H1 (cell line): ENCODE measurements at regions of chr9 and their contacts with region 1.

Region 1: DNA sequence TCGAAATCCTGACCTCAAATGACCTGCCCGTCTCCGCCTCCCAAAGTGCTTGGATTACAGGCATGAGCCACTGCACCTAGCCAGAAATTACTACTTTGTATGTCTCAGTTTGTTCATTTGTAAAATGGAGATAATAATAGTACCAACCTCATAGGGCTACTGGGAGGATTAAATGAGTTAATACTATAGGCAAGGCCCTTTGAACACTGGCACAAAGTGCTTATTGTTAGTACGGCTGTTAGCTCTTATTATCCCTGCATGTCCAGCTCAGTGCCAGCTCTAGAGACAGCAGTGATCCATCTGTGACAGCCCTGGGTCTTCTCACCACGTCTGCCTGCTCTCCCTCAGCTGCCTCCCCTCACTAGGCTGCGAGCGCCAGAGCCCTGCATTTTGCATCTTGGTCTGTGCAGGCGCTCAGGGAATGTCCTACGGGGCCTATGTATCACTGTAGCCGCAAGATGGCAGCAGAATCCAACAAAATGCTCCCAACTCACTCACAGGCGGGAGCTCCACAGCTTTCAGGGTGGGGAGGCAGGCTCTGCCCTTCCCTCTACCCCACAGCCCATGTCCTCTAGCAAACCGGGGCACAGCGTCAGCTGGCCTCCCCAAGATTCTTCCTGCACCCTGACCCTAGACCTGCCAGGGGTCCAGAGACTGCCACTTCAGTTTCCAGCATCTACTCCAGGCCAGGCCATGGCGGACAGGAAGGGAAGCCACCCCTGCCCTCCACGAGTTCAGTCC is 17.7 kb upstream of the AKNA start:
- DNase-seq: peak in 1 of 2 experiments; percentile 82
- H3K4me3 ChIP-seq: no peak overlapping the region
- H3K27ac ChIP-seq: no peak overlapping the region
- H3K4me1 ChIP-seq: peaks cover 0 to 12% (median 6%) of the 10 kb centered on the region in 4 experiments; a peak in 5 of 7 replicates
- H3K27me3 ChIP-seq: no peaks in the 10 kb centered on the region
- CTCF ChIP-seq: peak; percentile 77 to 93 (median 86)
- EP300 ChIP-seq: no peak
- POLR2A ChIP-seq: no peak
- RAD21 ChIP-seq: peak; percentile 97

Region 2: GRCh38 chr9:114207034-114207810 is 198.2 kb before region 1 on chr9:
- CTCF ChIA-PET with region 1: no interaction called
- POLR2A ChIA-PET with region 1: no interaction called
- DNase-seq: no peak
- H3K4me3 ChIP-seq: no peak overlapping the region
- H3K27ac ChIP-seq: no peak overlapping the region
- H3K4me1 ChIP-seq: peaks cover 0 to 24% (median 6%) of the 10 kb centered on the region in 4 experiments; a peak in 6 of 7 replicates
- H3K27me3 ChIP-seq: no peaks in the 10 kb centered on the region
- CTCF ChIP-seq: no peak
- EP300 ChIP-seq: no peak
- POLR2A ChIP-seq: no peak
- RAD21 ChIP-seq: no peak

Region 3: GRCh38 chr9:114271641-114272081 is 133.8 kb before region 1 on chr9:
- CTCF ChIA-PET with region 1: no interaction called
- POLR2A ChIA-PET with region 1: no interaction called
- DNase-seq: peak in 1 of 2 experiments; percentile 80
- H3K4me3 ChIP-seq: no peak overlapping the region
- H3K27ac ChIP-seq: no peak overlapping the region
- H3K4me1 ChIP-seq: no peaks in the 10 kb centered on the region
- H3K27me3 ChIP-seq: no peaks in the 10 kb centered on the region
- CTCF ChIP-seq: peak; percentile 66 to 69 (median 66)
- EP300 ChIP-seq: no peak
- POLR2A ChIP-seq: no peak
- RAD21 ChIP-seq: peak; percentile 70 to 77

Region 4: DNA sequence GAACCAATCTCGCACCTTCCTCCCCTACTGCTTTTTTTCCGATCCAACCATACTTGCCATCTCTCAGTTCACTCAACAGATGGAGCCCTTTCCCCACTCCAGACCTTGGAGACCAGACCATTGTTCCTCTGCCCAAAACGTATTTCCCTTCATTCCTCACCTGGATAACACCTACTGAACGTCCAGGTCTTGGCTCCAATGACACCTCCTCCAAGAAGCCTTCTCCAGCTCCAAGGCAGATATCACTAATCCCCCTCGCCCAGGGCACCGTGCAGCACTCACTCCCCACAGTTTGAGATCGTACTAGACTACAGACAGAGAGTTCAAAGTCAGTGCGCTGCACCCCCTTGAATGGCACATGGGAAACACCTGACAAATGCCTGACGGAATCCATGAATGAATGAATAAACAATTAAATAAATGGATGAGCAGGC is 29.4 kb after region 1 on chr9:
- CTCF ChIA-PET with region 1: interaction called, 271 read pairs
- POLR2A ChIA-PET with region 1: interaction called, 3 read pairs
- DNase-seq: peak in 1 of 2 experiments; percentile 31
- H3K4me3 ChIP-seq: no peak overlapping the region
- H3K27ac ChIP-seq: no peak overlapping the region
- H3K4me1 ChIP-seq: peaks cover 0 to 6% (median 0%) of the 10 kb centered on the region in 4 experiments; a peak in 3 of 7 replicates
- H3K27me3 ChIP-seq: no peaks in the 10 kb centered on the region
- CTCF ChIP-seq: peak; percentile 51 to 91 (median 84)
- EP300 ChIP-seq: no peak
- POLR2A ChIP-seq: no peak
- RAD21 ChIP-seq: peak; percentile 96

Region 5: GRCh38 chr9:114505187-114506081 is 100.0 kb after region 1 on chr9 and contains the start of gene WHRN:
- CTCF ChIA-PET with region 1: interaction called, 24 read pairs
- POLR2A ChIA-PET with region 1: interaction called, 3 read pairs
- DNase-seq: peak; percentile 77 to 94
- H3K4me3 ChIP-seq: peak within 1 kb of the TSS; percentile 62 to 68 (median 66)
- H3K27ac ChIP-seq: no peak within 1 kb of the TSS
- H3K4me1 ChIP-seq: peaks cover 10 to 22% (median 16%) of the 10 kb centered on the region in 4 experiments
- H3K27me3 ChIP-seq: peaks cover 2 to 14% (median 8%) of the 10 kb centered on the region in 4 experiments; a peak in 6 of 7 replicates
- CTCF ChIP-seq: peak in 2 of 3 experiments; percentile 0 to 3; a peak in 2 of 4 replicates
- EP300 ChIP-seq: no peak
- POLR2A ChIP-seq: peak; percentile 45 to 64
- RAD21 ChIP-seq: peak; percentile 1 to 9; a peak in 1 of 4 replicates
- total RNA-seq, gene WHRN: 7.4 and 7.7 TPM in 2 replicates

Region 6: GRCh38 chr9:114653556-114654159 is 248.2 kb after region 1 on chr9:
- CTCF ChIA-PET with region 1: interaction called, 116 read pairs
- POLR2A ChIA-PET with region 1: interaction called, 3 read pairs
- DNase-seq: peak; percentile 56 to 93
- H3K4me3 ChIP-seq: no peak overlapping the region
- H3K27ac ChIP-seq: no peak overlapping the region
- H3K4me1 ChIP-seq: peaks cover 0 to 3% (median 2%) of the 10 kb centered on the region in 4 experiments; a peak in 2 of 7 replicates
- H3K27me3 ChIP-seq: no peaks in the 10 kb centered on the region; a peak in 1 of 7 replicates
- CTCF ChIP-seq: peak; percentile 41 to 93 (median 89)
- EP300 ChIP-seq: no peak
- POLR2A ChIP-seq: no peak
- RAD21 ChIP-seq: peak; percentile 95 to 97

Region 7: DNA sequence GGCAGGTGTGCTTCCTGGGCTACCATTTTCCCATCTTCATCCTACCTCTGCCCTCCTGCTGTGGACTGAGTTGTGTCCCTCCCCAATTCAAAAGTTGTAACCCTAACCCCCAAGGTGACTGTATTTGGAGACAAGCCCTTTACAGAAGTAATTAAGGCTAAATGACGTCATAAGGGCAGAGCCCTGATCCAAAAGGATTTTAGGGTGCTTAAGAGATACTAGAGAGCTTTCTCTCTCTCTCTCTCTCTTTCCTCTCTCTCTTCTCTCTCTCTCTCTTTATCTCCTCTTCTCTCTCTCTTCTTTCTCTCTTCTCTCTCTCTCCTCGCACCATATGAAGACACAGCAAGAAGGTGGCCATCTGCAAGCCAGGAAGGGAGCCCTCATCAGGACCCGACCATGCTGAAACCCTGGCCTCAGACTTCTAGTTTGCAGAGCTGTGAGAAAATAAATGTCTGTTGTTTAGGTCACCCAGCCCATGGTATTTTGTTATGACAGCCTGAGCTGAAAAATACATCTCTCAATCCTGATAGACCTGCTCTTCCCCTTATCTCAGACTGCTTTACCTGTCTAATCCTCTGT is 312.5 kb after region 1 on chr9:
- CTCF ChIA-PET with region 1: no interaction called
- POLR2A ChIA-PET with region 1: no interaction called
- DNase-seq: no peak
- H3K4me3 ChIP-seq: no peak overlapping the region
- H3K27ac ChIP-seq: no peak overlapping the region
- H3K4me1 ChIP-seq: no peaks in the 10 kb centered on the region
- H3K27me3 ChIP-seq: no peaks in the 10 kb centered on the region; a peak in 2 of 7 replicates
- CTCF ChIP-seq: no peak
- EP300 ChIP-seq: no peak
- POLR2A ChIP-seq: no peak
- RAD21 ChIP-seq: no peak

Region 8: GRCh38 chr9:114738581-114739316 is 333.3 kb after region 1 on chr9:
- CTCF ChIA-PET with region 1: interaction called, 15 read pairs
- POLR2A ChIA-PET with region 1: no interaction called
- DNase-seq: peak; percentile 46 to 78
- H3K4me3 ChIP-seq: no peak overlapping the region
- H3K27ac ChIP-seq: no peak overlapping the region
- H3K4me1 ChIP-seq: no peaks in the 10 kb centered on the region
- H3K27me3 ChIP-seq: no peaks in the 10 kb centered on the region
- CTCF ChIP-seq: peak; percentile 62 to 92 (median 87)
- EP300 ChIP-seq: no peak
- POLR2A ChIP-seq: no peak
- RAD21 ChIP-seq: peak; percentile 98 to 99